ENCODE measurements at regions of chr12 and their contacts with region 1.

Region 1: DNA sequence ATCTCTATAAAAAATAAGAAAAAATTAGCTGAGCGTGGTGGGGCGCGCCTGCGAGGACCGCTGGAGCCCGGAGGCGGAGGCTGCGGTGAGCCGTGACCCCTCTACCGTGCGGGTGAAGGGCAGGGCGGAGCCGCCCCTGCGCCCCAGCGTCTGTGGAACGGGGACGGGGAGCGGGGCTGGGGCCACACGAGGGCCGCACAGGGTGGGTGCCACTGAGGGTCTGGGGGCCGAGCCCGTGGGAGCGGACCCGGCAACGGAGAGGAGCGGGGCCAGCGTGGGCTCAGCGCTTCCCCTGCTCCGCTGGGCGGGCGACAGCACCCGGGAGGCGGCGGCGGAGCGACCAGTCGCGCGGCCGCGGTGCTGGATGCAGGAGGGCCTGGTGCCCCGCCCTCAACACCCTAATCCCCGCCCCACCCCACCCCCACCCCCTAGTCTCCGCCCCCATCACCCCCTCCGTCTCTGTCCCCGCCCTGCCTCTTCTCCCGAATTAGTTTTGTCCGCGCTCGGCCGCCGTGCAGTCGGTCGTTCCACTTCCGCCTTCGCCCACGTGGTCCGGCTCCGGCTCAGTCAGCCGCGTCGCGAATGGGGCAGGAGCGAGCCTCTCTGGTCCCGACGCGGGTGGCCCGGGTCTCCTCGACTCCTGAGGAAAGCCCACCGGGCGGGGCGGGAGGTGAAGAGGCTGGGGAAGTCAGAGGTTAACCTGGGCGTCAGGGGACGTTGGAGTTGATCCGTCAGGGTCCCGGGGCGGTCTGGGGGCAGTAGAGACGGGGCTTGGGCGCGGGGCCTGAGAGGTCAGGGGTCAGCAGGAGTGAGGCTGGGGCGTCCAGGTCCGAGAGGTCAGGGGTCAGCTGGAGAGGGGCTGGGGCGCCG is at the start of gene PUS1:
- DNase-seq: peak; percentile 68
- ATAC-seq: peak; percentile 85
- H3K4me3 ChIP-seq: peak within 1 kb of the TSS; percentile 90
- H3K27ac ChIP-seq: peak within 1 kb of the TSS; percentile 84
- H3K4me1 ChIP-seq: peaks cover 11% of the 10 kb centered on the region
- H3K27me3 ChIP-seq: no peaks in the 10 kb centered on the region
- CTCF ChIP-seq: no peak
- EP300 ChIP-seq: no peak
- POLR2A ChIP-seq: peak; percentile 94
- RAD21 ChIP-seq: no peak
- polyA plus RNA-seq, gene PUS1: 1.3 to 5.5 TPM

Region 2: GRCh38 chr12:131894313-131894860 is 34.6 kb before region 1 on chr12 and contains the start of gene ULK1:
- CTCF ChIA-PET with region 1: no interaction called
- POLR2A ChIA-PET with region 1: no interaction called
- RAD21 ChIA-PET with region 1: no interaction called
- SMC1A ChIA-PET with region 1: interaction called, 3 read pairs
- in situ Hi-C with region 1: no loop called
- intact Hi-C with region 1: loop called (anchors 2 kb)
- DNase-seq: peak; percentile 16
- ATAC-seq: peak; percentile 86
- H3K4me3 ChIP-seq: peak within 1 kb of the TSS; percentile 73
- H3K27ac ChIP-seq: peak within 1 kb of the TSS; percentile 52
- H3K4me1 ChIP-seq: peaks cover 12% of the 10 kb centered on the region
- H3K27me3 ChIP-seq: no peaks in the 10 kb centered on the region
- CTCF ChIP-seq: no peak
- EP300 ChIP-seq: no peak
- POLR2A ChIP-seq: peak; percentile 80
- RAD21 ChIP-seq: no peak
- polyA plus RNA-seq, gene ULK1: 0.13 to 0.55 TPM

Region 3: DNA sequence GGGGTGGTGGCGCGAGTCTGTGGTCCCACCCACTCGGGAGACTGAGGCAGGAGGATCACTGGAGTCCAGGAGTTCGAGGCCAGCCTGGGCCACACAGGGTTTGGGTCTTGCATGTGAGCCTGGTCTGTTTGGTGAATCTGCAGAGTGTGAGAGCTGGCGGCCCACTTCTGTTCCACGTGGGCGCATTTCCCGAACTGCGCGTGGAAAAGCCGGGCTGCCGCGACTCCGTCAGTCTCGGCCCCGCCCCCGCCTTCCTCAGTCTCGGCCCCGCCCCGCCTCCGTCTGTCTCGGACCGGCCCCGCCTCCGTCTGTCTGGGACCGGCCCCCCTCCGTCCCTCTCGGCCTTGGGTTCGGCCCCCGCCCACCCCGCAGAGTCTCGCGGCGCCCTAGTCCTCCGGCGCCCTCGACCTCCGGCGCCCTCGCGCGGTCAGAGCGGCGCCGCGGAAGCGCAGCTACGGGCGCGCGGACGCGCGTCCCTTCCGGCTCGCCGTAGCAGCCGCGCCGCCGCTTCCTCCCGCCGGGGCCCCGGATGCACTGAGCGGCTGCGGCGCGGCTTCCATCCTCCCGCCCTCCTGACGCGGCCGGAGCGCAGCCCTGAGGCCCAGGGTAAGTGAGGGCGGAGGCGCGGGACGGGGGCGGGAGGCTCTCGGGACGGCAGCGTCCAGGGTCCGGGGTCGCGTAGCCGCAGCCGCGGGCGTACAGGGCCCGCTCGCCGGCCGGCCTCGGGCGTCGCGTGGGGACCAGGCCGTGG is 20.7 kb after region 1 on chr12 and contains the start of gene EP400:
- CTCF ChIA-PET with region 1: no interaction called
- POLR2A ChIA-PET with region 1: interaction called, 4 read pairs
- RAD21 ChIA-PET with region 1: no interaction called
- SMC1A ChIA-PET with region 1: interaction called, 4 read pairs
- in situ Hi-C with region 1: no loop called
- intact Hi-C with region 1: loop called (anchors 2 kb)
- DNase-seq: peak; percentile 53
- ATAC-seq: peak; percentile 96
- H3K4me3 ChIP-seq: peak within 1 kb of the TSS; percentile 91
- H3K27ac ChIP-seq: peak within 1 kb of the TSS; percentile 75
- H3K4me1 ChIP-seq: peaks cover 3% of the 10 kb centered on the region; the same call in 1 of the 2 replicates
- H3K27me3 ChIP-seq: no peaks in the 10 kb centered on the region
- CTCF ChIP-seq: peak; percentile 48 to 76 (median 52); a peak in 5 of 6 replicates
- EP300 ChIP-seq: 0 out of 4 replicates have a peak, but pooled peaks of 1 of the 2 experiments have one; percentile 12
- POLR2A ChIP-seq: peak; percentile 87
- RAD21 ChIP-seq: peak; percentile 69
- polyA plus RNA-seq, gene EP400: 4.0 to 6.4 TPM

Measured in GM12878 (cell line).